ENCODE measurements at regions of chr1 and their contacts with region 1.

Region 1: DNA sequence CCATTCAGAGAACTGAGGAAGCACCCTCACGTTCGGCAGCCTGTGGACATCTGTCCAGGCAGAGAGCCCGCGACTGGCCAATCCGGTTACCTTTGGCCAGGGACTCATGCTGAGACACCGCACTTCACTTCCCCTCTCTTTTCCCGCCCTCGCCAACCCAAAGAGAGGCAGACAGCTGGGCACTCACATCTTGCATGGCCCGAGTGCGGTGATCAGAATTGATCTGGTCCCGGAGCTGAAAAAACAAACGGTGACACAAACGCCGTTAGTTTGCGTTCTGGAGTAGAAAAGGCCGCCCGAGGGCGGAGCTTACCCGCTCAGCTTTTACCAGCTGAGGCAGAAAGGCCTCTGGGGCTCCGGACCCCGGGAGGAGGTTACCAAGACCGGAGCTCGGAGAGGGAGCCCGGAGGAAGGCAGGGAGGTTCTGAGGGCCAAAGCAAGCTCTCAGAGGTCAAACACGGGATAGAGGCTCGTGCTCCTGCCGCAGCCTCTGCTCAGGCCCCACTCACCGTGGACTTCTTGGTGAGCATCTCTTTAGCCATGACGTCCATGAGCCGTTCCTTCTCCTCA is 376 bp downstream of the SF3A3 start:
- DNase-seq: peak in 11 of 14 experiments; percentile 22 to 66 (median 35)
- ATAC-seq: peak; percentile 50
- H3K4me3 ChIP-seq: peak overlapping the region; percentile 100
- H3K4me3 Mint-ChIP-seq: peak overlapping the region; percentile 100
- H3K27ac ChIP-seq: peak overlapping the region; percentile 64 to 72
- H3K27ac Mint-ChIP-seq: peak overlapping the region; percentile 79
- H3K4me1 ChIP-seq: peaks cover 27% of the 10 kb centered on the region
- H3K4me1 Mint-ChIP-seq: peaks cover 28% of the 10 kb centered on the region
- H3K27me3 ChIP-seq: no peaks in the 10 kb centered on the region
- H3K27me3 Mint-ChIP-seq: no peaks in the 10 kb centered on the region
- CTCF ChIP-seq: no peak

Region 2: DNA sequence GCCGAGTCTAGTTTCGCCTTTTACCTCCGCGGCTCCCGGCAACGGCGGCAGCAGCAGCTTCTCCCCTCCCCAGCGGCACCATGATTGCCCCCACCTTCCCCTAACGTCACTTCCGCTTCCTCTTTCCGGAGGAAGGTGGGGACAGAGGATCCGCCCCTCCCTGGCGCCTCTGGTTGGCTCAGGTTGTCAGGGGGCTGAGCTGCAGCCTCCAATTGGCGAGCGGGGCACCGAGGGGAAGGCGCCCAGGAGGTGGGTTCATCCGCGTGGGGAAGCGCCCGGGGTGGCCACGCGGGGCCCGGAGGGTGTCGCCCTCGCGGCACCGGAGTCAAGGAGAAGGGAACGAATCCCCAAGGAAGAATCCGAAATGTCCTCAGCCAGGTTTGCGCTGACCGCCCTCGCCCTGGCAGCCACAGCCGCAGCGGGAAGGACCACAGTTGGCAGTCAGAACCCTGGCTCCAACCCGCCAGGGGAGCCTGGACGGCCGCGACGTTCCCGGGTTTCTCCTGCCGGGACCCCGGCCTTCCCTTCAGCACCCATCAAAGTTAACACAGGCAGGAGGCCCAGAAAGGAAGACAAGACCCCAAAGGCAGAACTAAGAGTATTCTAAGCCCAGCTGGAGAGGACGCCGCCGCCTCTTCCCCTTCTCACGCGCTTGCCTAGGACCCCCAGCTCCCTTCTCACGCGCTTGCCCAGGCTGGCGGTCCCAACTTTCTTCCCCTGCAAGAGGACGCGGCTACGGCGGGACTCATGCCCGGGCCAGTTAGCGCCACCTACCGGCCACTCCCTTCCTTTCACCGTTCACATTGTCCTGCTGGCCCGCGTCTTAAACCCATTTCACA is 129.7 kb before region 1 on chr1 and contains the start of gene MTF1:
- CTCF ChIA-PET with region 1: no interaction called
- POLR2A ChIA-PET with region 1: interaction called, 6 read pairs
- intact Hi-C with region 1: loop called in 1 of 2 experiments (anchors 2 kb)
- DNase-seq: peak; percentile 91 to 99 (median 95)
- ATAC-seq: peak; percentile 98
- H3K4me3 ChIP-seq: peak within 1 kb of the TSS; percentile 88
- H3K4me3 Mint-ChIP-seq: peak within 1 kb of the TSS; percentile 98
- H3K27ac ChIP-seq: peak within 1 kb of the TSS; percentile 81 to 91
- H3K27ac Mint-ChIP-seq: peak within 1 kb of the TSS; percentile 87
- H3K4me1 ChIP-seq: peaks cover 18% of the 10 kb centered on the region
- H3K4me1 Mint-ChIP-seq: peaks cover 41% of the 10 kb centered on the region
- H3K27me3 ChIP-seq: no peaks in the 10 kb centered on the region
- H3K27me3 Mint-ChIP-seq: no peaks in the 10 kb centered on the region
- CTCF ChIP-seq: peak; percentile 91
- total RNA-seq, gene MTF1: 28.1 to 31.2 TPM

Region 3: GRCh38 chr1:37946703-37947360 is 42.6 kb before region 1 on chr1 and contains the start of gene INPP5B:
- CTCF ChIA-PET with region 1: no interaction called
- POLR2A ChIA-PET with region 1: interaction called, 3 read pairs
- intact Hi-C with region 1: loop called in 1 of 2 experiments (anchors 5 kb)
- DNase-seq: peak in 13 of 14 experiments; percentile 25 to 81 (median 51)
- ATAC-seq: peak; percentile 83
- H3K4me3 ChIP-seq: peak within 1 kb of the TSS; percentile 61
- H3K4me3 Mint-ChIP-seq: peak within 1 kb of the TSS; percentile 89
- H3K27ac ChIP-seq: peak within 1 kb of the TSS; percentile 15 to 19
- H3K27ac Mint-ChIP-seq: peak within 1 kb of the TSS; percentile 70
- H3K4me1 ChIP-seq: peaks cover 19% of the 10 kb centered on the region
- H3K4me1 Mint-ChIP-seq: peaks cover 16% of the 10 kb centered on the region
- H3K27me3 ChIP-seq: no peaks in the 10 kb centered on the region
- H3K27me3 Mint-ChIP-seq: no peaks in the 10 kb centered on the region
- CTCF ChIP-seq: no peak
- total RNA-seq, gene INPP5B: 11.7 to 12.7 TPM

Region 4: GRCh38 chr1:38012363-38013226 is 23.1 kb after region 1 on chr1 and contains the start of gene UTP11:
- CTCF ChIA-PET with region 1: interaction called, 16 read pairs
- POLR2A ChIA-PET with region 1: interaction called, 11 read pairs
- intact Hi-C with region 1: loop called (anchors 1 to 2 kb)
- DNase-seq: peak; percentile 80 to 97 (median 85)
- ATAC-seq: peak; percentile 94
- H3K4me3 ChIP-seq: peak within 1 kb of the TSS; percentile 86
- H3K4me3 Mint-ChIP-seq: peak within 1 kb of the TSS; percentile 99
- H3K27ac ChIP-seq: peak within 1 kb of the TSS; percentile 75 to 83
- H3K27ac Mint-ChIP-seq: peak within 1 kb of the TSS; percentile 97
- H3K4me1 ChIP-seq: peaks cover 47% of the 10 kb centered on the region
- H3K4me1 Mint-ChIP-seq: peaks cover 39% of the 10 kb centered on the region
- H3K27me3 ChIP-seq: no peaks in the 10 kb centered on the region
- H3K27me3 Mint-ChIP-seq: no peaks in the 10 kb centered on the region
- CTCF ChIP-seq: no peak
- total RNA-seq, gene UTP11: 8.7 to 9.4 TPM

Region 5: DNA sequence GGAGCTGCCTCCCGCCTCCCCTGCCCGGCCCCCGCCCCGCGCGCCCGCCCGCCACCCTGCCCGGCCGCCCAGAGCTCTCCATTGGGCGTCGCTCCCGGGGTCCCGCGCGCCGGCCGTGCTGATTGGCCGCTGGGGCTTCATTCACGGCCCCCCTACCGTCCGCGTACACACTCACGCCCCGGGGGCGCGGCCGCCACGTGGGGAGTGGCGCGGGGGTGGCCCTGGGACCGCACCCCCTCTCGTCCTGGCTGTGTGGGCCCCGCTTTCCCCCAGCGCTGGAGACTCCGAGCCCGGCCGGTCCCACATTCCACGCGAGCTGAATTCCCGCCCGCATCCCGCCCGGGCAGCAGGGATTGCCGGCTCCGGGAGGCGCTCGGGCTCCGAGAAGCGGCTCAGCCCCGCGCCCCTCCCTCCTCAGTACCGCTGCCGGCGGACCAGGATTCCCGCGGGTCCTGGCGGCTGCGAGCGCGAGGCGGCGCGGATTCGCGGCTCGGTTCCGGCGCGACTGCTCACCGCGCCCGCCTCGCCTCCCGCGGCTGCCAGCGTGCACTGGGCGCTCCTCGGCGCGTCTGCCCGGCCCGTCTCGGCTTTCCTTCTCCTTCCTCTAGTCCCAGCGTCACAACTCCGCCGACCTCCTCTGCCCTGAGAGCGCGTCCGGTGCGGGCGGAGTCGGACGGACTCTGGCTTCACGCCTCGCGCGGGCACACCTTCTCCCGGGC is 57.6 kb after region 1 on chr1:
- CTCF ChIA-PET with region 1: no interaction called
- POLR2A ChIA-PET with region 1: no interaction called
- intact Hi-C with region 1: no loop called
- DNase-seq: peak in 13 of 14 experiments; percentile 28 to 85 (median 70)
- ATAC-seq: peak; percentile 50
- H3K4me3 ChIP-seq: peak overlapping the region; percentile 43
- H3K4me3 Mint-ChIP-seq: peak overlapping the region; percentile 79
- H3K27ac ChIP-seq: no peak overlapping the region
- H3K27ac Mint-ChIP-seq: no peak overlapping the region
- H3K4me1 ChIP-seq: peaks cover 30% of the 10 kb centered on the region
- H3K4me1 Mint-ChIP-seq: peaks cover 12% of the 10 kb centered on the region
- H3K27me3 ChIP-seq: peaks cover 33 to 34% of the 10 kb centered on the region in 2 experiments
- H3K27me3 Mint-ChIP-seq: peaks cover 41% of the 10 kb centered on the region
- CTCF ChIP-seq: no peak

Region 6: GRCh38 chr1:38235705-38236104 is 246.3 kb after region 1 on chr1:
- CTCF ChIA-PET with region 1: no interaction called
- POLR2A ChIA-PET with region 1: no interaction called
- intact Hi-C with region 1: no loop called
- DNase-seq: no peak
- ATAC-seq: no peak
- H3K4me3 ChIP-seq: no peak overlapping the region
- H3K4me3 Mint-ChIP-seq: no peak overlapping the region
- H3K27ac ChIP-seq: no peak overlapping the region
- H3K27ac Mint-ChIP-seq: no peak overlapping the region
- H3K4me1 ChIP-seq: no peaks in the 10 kb centered on the region
- H3K4me1 Mint-ChIP-seq: no peaks in the 10 kb centered on the region
- H3K27me3 ChIP-seq: peaks cover 0 to 4% of the 10 kb centered on the region in 2 experiments
- H3K27me3 Mint-ChIP-seq: peaks cover 7% of the 10 kb centered on the region
- CTCF ChIP-seq: no peak

Region 7: GRCh38 chr1:38834937-38835827 is 845.7 kb after region 1 on chr1:
- CTCF ChIA-PET with region 1: interaction called, 3 read pairs
- POLR2A ChIA-PET with region 1: no interaction called
- intact Hi-C with region 1: loop called in 1 of 2 experiments (anchors 1 kb)
- DNase-seq: peak in 8 of 14 experiments; percentile 9 to 87 (median 46)
- ATAC-seq: peak; percentile 84
- H3K4me3 ChIP-seq: no peak overlapping the region
- H3K4me3 Mint-ChIP-seq: no peak overlapping the region
- H3K27ac ChIP-seq: no peak overlapping the region
- H3K27ac Mint-ChIP-seq: no peak overlapping the region
- H3K4me1 ChIP-seq: no peaks in the 10 kb centered on the region
- H3K4me1 Mint-ChIP-seq: peaks cover 7% of the 10 kb centered on the region
- H3K27me3 ChIP-seq: no peaks in the 10 kb centered on the region
- H3K27me3 Mint-ChIP-seq: peaks cover 8% of the 10 kb centered on the region
- CTCF ChIP-seq: peak; percentile 93

Measured in CD4-positive, alpha-beta T cell (primary cell).